ENCODE measurements at regions of chr15 and their contacts with region 1.

Region 1: DNA sequence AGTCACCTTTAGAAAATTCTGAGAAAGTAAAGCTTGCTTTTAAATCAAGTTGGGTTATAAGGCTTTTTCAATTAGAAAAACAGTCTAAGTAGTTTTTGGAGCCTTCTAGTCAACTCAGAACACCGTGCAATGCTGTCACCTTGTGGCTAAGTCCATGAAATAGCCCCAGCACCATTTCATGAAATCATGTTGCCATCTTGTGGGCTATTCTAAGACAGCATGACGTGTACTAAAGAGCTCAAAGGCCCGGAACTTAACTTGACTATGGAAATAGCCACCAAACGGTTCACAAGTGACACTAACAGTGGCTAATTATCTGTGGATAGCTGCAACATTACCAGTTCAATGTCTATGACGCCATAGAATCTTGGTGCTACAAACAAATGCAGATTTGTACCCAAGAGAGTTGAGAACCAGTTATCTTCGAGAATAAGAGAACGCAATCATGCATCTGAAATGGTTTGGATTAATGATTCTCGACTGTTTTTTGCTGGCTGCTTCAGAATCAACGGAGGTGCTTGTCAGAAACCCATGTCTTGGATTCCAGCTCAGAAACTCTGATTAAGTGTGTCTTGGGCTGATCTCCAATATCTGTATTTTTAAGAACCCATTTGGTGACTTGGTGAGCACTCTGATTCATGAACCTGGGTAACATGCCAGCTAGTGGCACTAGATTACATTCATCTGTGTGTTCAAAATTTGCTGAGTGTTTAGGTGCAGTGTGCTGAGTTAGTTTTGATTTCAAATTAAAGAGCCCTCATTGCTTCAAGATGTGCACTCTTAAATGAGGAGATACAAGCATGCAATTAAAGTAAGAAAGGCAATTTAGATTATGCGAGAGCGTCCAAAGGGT is 111.2 kb upstream of the MCTP2 start:
- DNase-seq: peak in 1 of 2 donors; percentile 74
- H3K4me3 ChIP-seq: no peak overlapping the region
- CTCF ChIP-seq: peak in 1 of 3 donors; percentile 84
- POLR2A ChIP-seq: no peak

Region 2: DNA sequence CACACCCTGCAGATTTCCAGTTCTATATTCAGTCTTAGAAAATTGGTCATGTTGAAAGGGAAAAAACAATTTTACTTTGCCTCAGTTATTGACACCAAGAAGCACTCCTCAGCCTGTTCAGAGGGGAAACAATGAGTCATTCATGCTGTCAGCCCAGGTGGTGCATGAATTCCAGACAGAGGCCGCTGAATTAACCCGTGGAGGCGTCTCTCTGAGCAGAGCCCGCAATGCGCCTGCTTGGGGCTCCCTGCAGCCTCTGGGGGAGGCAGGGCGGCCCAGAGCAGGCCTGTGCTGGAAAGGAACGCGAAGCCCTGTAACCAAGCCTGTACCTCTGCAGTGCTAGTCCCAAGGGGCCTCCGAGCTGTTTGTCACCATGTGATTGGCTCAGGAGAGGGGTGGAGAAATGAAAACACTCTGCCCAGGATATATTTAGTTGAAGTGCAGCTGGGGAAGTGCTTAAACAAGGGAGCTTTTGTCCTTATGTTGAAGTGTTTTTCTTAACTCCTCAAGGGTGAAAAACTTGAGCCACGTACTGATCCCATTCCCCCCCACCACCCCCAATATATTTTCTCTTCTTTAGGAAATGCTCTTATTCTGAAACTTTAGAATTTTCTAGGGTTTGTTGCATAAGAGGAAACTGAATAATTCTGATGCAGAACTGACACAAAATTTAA is 1288.4 kb before region 1 on chr15:
- intact Hi-C with region 1: no loop called
- DNase-seq: peak; percentile 92 to 95
- H3K4me3 ChIP-seq: no peak overlapping the region
- CTCF ChIP-seq: no peak
- POLR2A ChIP-seq: peak in 1 of 2 donors; percentile 51

Region 3: GRCh38 chr15:93035953-93036800 is 1084.0 kb before region 1 on chr15:
- intact Hi-C with region 1: loop called (anchors 5 kb)
- DNase-seq: peak in 1 of 2 donors; percentile 85
- H3K4me3 ChIP-seq: no peak overlapping the region
- CTCF ChIP-seq: no peak
- POLR2A ChIP-seq: no peak

Region 4: GRCh38 chr15:93087825-93088199 is 1032.3 kb before region 1 on chr15:
- intact Hi-C with region 1: loop called (anchors 10 kb)
- DNase-seq: peak; percentile 85 to 96
- H3K4me3 ChIP-seq: no peak overlapping the region
- CTCF ChIP-seq: peak in 1 of 3 donors; percentile 54
- POLR2A ChIP-seq: no peak

Region 5: DNA sequence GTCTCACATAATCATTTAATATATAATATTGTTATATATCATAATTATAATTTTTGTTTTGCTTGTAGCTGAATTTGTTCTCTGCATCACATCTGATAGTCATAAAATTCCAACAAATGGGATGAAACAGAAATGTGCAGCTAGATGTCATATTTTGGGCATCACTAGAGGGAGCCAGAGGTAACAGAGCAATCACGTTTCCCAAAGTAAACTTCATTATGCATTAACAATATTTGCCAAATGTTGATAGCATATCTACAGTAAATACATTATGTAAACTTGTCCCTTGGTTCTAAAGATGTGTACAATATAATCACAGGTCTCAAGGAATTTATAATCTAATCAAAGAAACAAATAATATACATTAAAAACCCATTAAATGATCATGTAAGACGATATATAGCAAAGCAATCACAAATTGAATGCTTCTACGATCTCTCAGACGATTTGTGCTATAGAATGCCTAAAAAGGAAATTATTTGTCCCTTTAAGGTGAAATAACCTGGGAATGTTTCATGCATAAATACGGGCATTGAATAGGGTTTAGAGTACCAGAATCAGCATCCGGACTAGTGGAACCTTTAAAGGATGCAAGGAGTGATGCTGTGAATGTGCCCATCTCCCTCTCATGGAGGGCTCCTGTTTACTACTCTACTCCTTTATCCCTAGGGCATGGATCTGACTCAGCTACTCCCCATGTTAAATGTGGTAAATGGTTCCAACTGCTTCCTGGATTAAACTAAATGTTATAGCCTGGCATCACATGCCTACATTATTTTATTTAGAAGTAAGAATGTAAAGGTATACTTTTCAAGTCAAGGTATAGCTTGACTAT is 122.8 kb before region 1 on chr15:
- intact Hi-C with region 1: loop called (anchors 5 kb)
- DNase-seq: no peak
- H3K4me3 ChIP-seq: no peak overlapping the region
- CTCF ChIP-seq: no peak
- POLR2A ChIP-seq: no peak

Region 6: DNA sequence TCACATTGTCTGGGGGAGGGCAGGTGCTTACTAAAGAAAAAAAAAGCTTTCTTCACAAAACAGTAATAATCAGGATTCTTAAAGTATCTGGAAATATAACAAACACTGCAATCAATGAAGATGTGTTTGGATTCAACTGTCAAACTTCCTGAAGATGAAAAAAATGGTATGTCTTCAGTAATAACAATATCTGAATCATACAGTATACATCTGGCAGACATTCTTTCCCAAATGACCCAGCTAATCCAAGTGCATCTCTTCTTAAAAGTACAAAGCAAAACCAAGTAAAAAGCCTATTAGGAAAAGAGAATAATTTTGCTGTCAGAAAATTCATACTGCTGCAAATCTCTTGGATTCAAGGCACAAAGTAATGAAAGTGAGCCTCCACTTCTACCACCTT is 33.8 kb before region 1 on chr15:
- intact Hi-C with region 1: no loop called
- DNase-seq: no peak
- H3K4me3 ChIP-seq: no peak overlapping the region
- CTCF ChIP-seq: no peak
- POLR2A ChIP-seq: no peak

Measured in lower leg skin (tissue), 4 donors.